ENCODE measurements at regions of chr14 and their contacts with region 1.

Region 1: DNA sequence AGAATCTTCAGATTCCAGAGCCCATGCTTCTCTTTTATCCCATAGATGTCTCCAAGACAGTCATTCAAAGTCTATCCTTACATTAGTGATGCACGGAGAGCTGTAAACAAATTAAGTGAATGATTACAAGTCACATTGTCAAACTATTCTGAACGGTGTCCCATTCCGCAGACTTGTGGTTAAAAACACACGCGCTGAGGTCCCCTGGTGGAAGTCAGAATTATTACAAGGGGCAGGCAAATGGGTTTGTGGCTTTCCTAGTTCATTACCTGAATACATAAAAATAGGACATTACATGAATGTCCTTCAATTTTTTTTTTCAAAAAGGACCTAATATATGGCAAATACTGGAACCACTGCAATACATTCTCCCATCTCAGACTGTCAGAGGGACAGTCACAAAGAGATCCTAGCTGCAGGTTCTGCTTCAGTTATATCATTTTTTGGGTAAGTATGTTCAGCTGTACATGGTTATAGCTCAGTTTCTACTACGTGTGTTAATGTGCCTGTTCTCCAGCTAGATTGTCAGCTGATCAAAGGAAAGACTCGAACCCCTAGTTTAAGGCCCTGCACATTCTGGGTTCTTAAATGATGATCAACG is 53.1 kb upstream of the STON2 start:
- DNase-seq: peak in 3 of 6 donors; percentile 45 to 68 (median 67)
- ATAC-seq: peak; percentile 78 to 92 (median 89)
- H3K4me3 ChIP-seq: no peak overlapping the region
- H3K27ac ChIP-seq: no peak overlapping the region
- H3K4me1 ChIP-seq: no peaks in the 10 kb centered on the region
- H3K27me3 ChIP-seq: peaks cover 0 to 5% (median 0%) of the 10 kb centered on the region in 4 donors
- CTCF ChIP-seq: peak; percentile 57 to 81 (median 78)

Region 2: DNA sequence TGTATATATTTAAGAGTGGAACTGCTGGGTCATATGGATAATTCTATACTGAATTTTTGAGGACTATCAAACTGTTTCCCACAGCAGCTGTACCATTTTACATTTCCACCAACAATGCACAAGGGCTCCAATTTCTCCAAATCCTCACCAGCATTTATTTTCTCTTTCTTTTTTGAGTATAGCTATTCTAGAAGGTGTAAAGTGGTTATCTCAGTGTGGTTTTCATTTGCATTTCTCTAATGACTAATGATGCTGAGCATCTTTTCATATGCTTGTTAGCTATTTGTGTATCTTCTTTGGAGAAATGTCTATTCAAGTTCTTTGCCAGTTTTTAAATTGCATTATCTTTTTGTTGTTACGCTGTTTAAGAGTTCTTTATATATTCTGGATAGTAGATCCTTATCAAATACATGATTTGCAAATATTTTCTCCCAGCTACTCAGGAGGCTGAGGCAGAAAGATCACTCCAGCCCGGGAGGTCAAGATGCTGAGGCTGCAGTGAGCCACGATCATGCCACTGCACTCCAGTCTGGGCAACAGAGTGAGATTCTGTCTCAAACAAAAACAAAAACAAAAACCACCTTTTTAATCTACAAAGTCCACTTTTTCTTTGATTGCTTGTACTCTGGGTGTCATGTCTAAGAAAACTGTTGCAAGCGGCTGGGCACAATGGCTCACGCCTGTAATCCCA is 265.3 kb before region 1 on chr14:
- intact Hi-C with region 1: no loop called
- DNase-seq: no peak
- ATAC-seq: no peak
- H3K4me3 ChIP-seq: no peak overlapping the region
- H3K27ac ChIP-seq: no peak overlapping the region
- H3K4me1 ChIP-seq: no peaks in the 10 kb centered on the region
- H3K27me3 ChIP-seq: no peaks in the 10 kb centered on the region
- CTCF ChIP-seq: no peak

Region 3: GRCh38 chr14:81265636-81266169 is 187.6 kb before region 1 on chr14:
- intact Hi-C with region 1: loop called (anchors 2 to 10 kb)
- DNase-seq: no peak
- ATAC-seq: no peak
- H3K4me3 ChIP-seq: no peak overlapping the region
- H3K27ac ChIP-seq: no peak overlapping the region
- H3K4me1 ChIP-seq: no peaks in the 10 kb centered on the region
- H3K27me3 ChIP-seq: no peaks in the 10 kb centered on the region
- CTCF ChIP-seq: no peak

Region 4: DNA sequence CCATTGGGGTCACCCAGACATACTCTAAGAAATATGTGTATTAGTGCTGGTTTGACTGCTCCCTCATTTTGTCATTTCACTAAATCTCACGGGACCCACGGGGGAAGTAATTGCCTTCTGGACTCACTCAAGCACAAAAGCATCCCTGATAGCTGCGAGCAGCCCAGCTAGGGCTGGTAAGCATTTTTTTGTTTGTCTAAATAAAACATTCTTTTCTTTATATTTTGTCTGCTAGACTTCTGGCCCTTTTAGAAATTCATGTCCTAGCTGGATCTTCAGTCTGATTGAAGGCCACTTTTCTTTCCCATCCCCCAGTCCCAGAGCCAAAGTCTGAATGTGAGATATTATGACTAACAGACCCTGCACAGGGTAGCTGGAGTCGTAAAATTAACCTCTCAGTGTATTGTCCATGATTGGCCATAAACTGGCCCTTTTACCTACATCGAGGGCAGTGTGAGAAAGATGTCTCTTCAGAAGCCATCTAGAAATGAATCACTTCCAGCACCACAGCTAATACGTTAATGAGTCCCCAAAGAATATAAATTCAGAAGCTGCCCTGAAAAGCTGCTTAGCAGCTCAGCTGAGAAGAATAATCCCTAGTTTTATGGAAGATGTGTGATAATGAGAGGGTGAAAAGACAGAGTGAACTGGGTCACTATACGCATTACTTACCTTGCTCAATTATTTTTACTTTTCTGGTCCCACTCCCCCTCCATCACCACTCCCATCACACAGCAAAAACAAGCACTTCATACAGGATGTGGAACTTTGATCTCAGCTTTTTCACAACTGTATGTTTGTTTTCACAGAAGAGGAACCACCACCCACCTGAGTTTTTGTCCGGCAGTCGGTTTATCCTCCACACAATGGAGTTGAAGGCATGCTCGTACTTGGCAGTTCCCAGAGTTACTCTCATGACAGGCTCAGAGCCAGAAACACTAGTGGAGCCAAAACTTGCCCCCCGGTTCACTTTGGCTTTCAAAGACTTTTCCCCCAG is 176.9 kb before region 1 on chr14:
- intact Hi-C with region 1: loop called in 2 of 3 experiments (anchors 2 to 10 kb)
- DNase-seq: no peak
- ATAC-seq: no peak
- H3K4me3 ChIP-seq: no peak overlapping the region
- H3K27ac ChIP-seq: no peak overlapping the region
- H3K4me1 ChIP-seq: no peaks in the 10 kb centered on the region
- H3K27me3 ChIP-seq: no peaks in the 10 kb centered on the region
- CTCF ChIP-seq: no peak

Region 5: DNA sequence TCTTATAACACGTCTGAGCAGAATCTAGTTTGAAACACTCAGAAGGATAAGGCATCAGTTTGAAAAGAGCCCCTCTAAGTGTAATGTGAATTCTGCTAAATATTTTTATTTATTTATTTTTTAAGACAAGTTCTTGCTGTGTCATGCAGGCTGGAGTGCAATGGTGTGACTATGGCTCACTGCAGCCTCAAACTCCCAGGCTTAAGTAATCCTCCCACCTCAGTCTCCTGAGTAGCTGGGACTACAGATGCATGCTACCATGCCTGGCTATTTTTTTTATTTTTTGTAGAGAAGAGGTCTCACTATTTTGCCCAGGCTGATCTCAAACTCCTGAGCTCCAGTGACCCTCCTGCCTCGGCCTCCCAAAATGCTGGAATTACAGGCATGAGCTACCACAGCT is 306.3 kb after region 1 on chr14:
- intact Hi-C with region 1: no loop called
- DNase-seq: no peak
- ATAC-seq: no peak
- H3K4me3 ChIP-seq: no peak overlapping the region
- H3K27ac ChIP-seq: no peak overlapping the region
- H3K4me1 ChIP-seq: no peaks in the 10 kb centered on the region
- H3K27me3 ChIP-seq: peaks cover 0 to 5% (median 0%) of the 10 kb centered on the region in 4 donors
- CTCF ChIP-seq: no peak